Ascending aorta (tissue), 2 donors: ENCODE measurements at regions of chr3 and their contacts with region 1.

Region 1: GRCh38 chr3:39849992-39850715 is 40.7 kb downstream of the MYRIP start:
- DNase-seq: no peak
- H3K4me3 ChIP-seq: no peak overlapping the region
- H3K27ac ChIP-seq: no peak overlapping the region
- H3K4me1 ChIP-seq: no peaks in the 10 kb centered on the region
- H3K27me3 ChIP-seq: no peaks in the 10 kb centered on the region
- CTCF ChIP-seq: no peak

Region 2: GRCh38 chr3:39907981-39908380 is 57.8 kb after region 1 on chr3:
- intact Hi-C with region 1: loop called (anchors 2 kb)
- DNase-seq: no peak
- H3K4me3 ChIP-seq: no peak overlapping the region
- H3K27ac ChIP-seq: no peak overlapping the region
- H3K4me1 ChIP-seq: peaks cover 0 to 9% of the 10 kb centered on the region in 2 donors
- H3K27me3 ChIP-seq: no peaks in the 10 kb centered on the region
- CTCF ChIP-seq: no peak